Activated CD4-positive, alpha-beta T cell treated with anti-CD3 and anti-CD28 coated beads for 36 hours (primary cell): ENCODE measurements at regions of chr17 and their contacts with region 1.

Region 1: DNA sequence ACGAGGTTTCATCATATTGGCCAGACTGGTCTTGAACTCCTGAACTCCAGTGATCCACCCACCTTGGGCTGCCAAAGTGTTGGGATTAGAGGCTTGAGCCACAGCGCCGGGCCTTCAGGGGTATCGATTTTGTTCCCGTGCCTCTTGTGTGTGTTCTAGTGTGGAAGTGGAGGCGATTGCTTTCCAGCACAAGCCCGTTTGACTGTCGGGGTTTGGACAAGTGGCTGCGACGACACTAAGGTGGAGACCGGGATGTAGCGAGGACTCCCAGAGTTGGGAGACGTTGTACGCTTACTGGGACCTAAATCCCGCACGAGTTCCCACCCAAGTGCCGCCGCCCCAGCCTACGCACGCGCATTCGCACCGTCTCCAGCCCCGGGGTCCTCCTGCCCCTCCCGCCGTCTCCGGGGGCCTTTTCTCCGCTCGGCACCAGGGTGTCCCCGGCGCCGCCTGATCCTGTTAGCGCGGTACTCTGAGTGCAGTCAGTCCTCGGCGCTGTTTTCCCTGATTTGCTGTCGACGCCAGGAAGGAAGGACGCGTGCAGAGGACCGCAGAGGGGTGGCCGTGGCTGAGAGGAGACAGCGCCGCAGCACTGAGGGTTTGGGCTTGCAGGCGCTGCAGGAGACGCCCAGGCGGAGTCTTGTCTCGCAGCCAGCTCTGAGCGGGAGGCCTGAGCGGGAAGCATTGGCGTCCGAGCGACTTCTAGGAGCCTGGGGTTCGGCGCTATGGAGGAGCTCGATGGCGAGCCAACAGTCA is at the start of gene NUP85:
- DNase-seq: peak; percentile 96
- ATAC-seq: peak; percentile 86
- H3K4me3 Mint-ChIP-seq: peak within 1 kb of the TSS; percentile 91
- H3K27ac Mint-ChIP-seq: peak within 1 kb of the TSS; percentile 100
- H3K4me1 Mint-ChIP-seq: peaks cover 18% of the 10 kb centered on the region
- H3K27me3 Mint-ChIP-seq: no peaks in the 10 kb centered on the region
- total RNA-seq, gene NUP85: 130 to 160 TPM

Region 2: DNA sequence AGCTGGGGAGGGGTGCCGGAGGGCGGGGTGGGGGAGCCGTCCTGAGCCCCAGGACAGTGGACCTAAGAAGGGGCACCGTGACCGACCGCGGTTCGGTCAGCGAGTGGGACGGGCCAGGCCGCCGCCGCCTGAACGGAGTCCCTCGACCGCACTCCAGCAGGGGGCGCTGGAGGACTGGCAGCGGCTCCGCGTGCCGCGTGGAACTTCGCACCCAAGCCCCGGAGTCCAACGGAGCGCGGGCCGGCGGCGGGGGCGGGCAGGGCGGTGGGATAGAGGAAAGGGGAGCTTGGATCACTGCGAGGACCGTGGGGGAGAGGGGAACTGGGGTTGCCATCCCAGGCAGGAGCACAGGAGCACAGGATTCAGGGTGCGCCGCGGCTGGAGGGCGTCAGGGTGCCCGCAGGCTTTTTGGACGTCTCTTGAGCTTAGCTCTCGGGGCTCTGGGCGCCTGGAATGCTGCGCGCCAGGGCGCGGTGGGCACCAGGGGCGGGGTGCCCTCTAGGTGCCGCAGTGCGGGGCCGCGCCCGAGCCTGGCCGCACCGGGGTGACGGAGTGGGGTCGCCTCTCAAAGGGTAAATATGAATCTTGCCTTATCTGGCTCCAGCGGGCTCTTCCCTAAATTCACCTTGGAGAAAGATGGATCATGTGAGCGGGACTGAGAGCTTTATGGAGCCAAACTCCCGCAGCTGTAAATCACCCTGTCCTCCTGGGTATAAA is 281.5 kb before region 1 on chr17:
- CTCF ChIA-PET with region 1: interaction called, 3 read pairs
- POLR2A ChIA-PET with region 1: no interaction called
- intact Hi-C with region 1: loop called in 1 of 2 experiments (anchors 1 kb)
- DNase-seq: peak; percentile 87
- ATAC-seq: peak; percentile 75
- H3K4me3 Mint-ChIP-seq: no peak overlapping the region
- H3K27ac Mint-ChIP-seq: no peak overlapping the region
- H3K4me1 Mint-ChIP-seq: peaks cover 7% of the 10 kb centered on the region
- H3K27me3 Mint-ChIP-seq: peaks cover 37% of the 10 kb centered on the region

Region 3: GRCh38 chr17:75034236-75034908 is 170.8 kb before region 1 on chr17:
- CTCF ChIA-PET with region 1: interaction called, 3 read pairs
- POLR2A ChIA-PET with region 1: interaction called, 4 read pairs
- intact Hi-C with region 1: loop called in 1 of 2 experiments (anchors 1 kb)
- DNase-seq: peak; percentile 96
- ATAC-seq: peak; percentile 65
- H3K4me3 Mint-ChIP-seq: peak overlapping the region; percentile 91
- H3K27ac Mint-ChIP-seq: peak overlapping the region; percentile 96
- H3K4me1 Mint-ChIP-seq: peaks cover 49% of the 10 kb centered on the region
- H3K27me3 Mint-ChIP-seq: no peaks in the 10 kb centered on the region

Region 4: GRCh38 chr17:75131280-75132017 is 73.8 kb before region 1 on chr17 and contains the start of gene NT5C:
- CTCF ChIA-PET with region 1: interaction called, 10 read pairs
- POLR2A ChIA-PET with region 1: no interaction called
- intact Hi-C with region 1: loop called in 1 of 2 experiments (anchors 1 kb)
- DNase-seq: peak; percentile 84
- ATAC-seq: peak; percentile 82
- H3K4me3 Mint-ChIP-seq: peak within 1 kb of the TSS; percentile 83
- H3K27ac Mint-ChIP-seq: peak within 1 kb of the TSS; percentile 90
- H3K4me1 Mint-ChIP-seq: peaks cover 11% of the 10 kb centered on the region
- H3K27me3 Mint-ChIP-seq: no peaks in the 10 kb centered on the region
- total RNA-seq, gene NT5C: 51.7 to 61.5 TPM

Region 5: GRCh38 chr17:75173526-75173925 is 31.7 kb before region 1 on chr17:
- CTCF ChIA-PET with region 1: interaction called, 61 read pairs
- POLR2A ChIA-PET with region 1: interaction called, 3 read pairs
- intact Hi-C with region 1: loop called in 1 of 2 experiments (anchors 1 kb)
- DNase-seq: no peak
- ATAC-seq: no peak
- H3K4me3 Mint-ChIP-seq: no peak overlapping the region
- H3K27ac Mint-ChIP-seq: no peak overlapping the region
- H3K4me1 Mint-ChIP-seq: peaks cover 14% of the 10 kb centered on the region
- H3K27me3 Mint-ChIP-seq: no peaks in the 10 kb centered on the region

Region 6: GRCh38 chr17:75261336-75262111 is 56.3 kb after region 1 on chr17 and contains the starts of genes GGA3 and MRPS7:
- CTCF ChIA-PET with region 1: interaction called, 6 read pairs
- POLR2A ChIA-PET with region 1: interaction called, 6 read pairs
- intact Hi-C with region 1: loop called in 1 of 2 experiments (anchors 1 kb)
- DNase-seq: peak; percentile 98
- ATAC-seq: peak; percentile 91
- H3K4me3 Mint-ChIP-seq: peak within 1 kb of the TSS; percentile 88
- H3K27ac Mint-ChIP-seq: peak within 1 kb of the TSS; percentile 96
- H3K4me1 Mint-ChIP-seq: peaks cover 48% of the 10 kb centered on the region
- H3K27me3 Mint-ChIP-seq: no peaks in the 10 kb centered on the region
- total RNA-seq, gene GGA3: 72.9 to 76.7 TPM
- total RNA-seq, gene MRPS7: 51.4 to 63.8 TPM

Region 7: DNA sequence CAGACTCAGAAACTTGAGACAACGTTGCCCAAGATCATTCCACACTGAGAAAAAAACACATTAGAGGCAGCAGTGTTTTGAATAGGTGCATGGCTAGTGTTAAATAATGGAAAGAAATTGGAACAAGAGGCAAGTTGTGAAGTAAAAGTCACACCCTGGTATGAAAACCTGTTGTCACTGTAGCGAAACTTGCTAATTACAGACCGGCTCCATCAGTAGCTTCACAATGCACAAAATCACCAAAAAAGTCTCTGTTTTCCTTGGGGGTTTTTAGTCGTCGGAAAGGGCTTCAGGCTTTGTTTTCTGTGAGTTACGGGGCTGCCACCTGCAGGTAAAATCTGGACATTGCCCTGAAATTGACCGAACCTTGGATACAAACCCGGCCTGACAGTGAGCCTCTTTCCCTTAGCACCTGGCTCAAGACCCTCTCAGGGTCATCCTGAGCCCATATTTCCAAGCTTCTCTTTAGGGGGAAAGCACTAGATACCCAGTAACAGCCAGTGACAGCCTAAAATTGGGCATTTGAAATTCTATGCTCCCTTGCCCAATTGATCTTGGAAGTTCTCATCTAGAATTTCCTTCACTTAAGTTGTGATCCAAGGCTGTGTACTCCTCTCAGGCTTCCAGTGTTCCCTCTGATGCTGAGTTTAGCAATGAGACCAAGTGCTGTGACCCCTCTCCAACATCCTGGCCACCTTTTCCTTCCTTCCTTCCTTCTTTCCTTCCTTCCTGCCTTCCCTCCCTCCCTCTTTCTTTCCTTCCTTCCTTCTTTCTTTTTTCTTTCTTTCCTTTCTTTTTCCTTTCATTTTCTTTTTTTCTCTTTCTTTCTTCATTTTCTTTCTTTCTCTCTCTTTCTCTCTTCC is 207.5 kb after region 1 on chr17:
- CTCF ChIA-PET with region 1: interaction called, 4 read pairs
- POLR2A ChIA-PET with region 1: no interaction called
- intact Hi-C with region 1: loop called in 1 of 2 experiments (anchors 1 kb)
- DNase-seq: peak; percentile 84
- ATAC-seq: peak; percentile 85
- H3K4me3 Mint-ChIP-seq: peak overlapping the region; percentile 44
- H3K27ac Mint-ChIP-seq: peak overlapping the region; percentile 3
- H3K4me1 Mint-ChIP-seq: peaks cover 15% of the 10 kb centered on the region
- H3K27me3 Mint-ChIP-seq: no peaks in the 10 kb centered on the region